ACHN (cell line): ENCODE measurements at regions of chr1 and their contacts with region 1.

Region 1: DNA sequence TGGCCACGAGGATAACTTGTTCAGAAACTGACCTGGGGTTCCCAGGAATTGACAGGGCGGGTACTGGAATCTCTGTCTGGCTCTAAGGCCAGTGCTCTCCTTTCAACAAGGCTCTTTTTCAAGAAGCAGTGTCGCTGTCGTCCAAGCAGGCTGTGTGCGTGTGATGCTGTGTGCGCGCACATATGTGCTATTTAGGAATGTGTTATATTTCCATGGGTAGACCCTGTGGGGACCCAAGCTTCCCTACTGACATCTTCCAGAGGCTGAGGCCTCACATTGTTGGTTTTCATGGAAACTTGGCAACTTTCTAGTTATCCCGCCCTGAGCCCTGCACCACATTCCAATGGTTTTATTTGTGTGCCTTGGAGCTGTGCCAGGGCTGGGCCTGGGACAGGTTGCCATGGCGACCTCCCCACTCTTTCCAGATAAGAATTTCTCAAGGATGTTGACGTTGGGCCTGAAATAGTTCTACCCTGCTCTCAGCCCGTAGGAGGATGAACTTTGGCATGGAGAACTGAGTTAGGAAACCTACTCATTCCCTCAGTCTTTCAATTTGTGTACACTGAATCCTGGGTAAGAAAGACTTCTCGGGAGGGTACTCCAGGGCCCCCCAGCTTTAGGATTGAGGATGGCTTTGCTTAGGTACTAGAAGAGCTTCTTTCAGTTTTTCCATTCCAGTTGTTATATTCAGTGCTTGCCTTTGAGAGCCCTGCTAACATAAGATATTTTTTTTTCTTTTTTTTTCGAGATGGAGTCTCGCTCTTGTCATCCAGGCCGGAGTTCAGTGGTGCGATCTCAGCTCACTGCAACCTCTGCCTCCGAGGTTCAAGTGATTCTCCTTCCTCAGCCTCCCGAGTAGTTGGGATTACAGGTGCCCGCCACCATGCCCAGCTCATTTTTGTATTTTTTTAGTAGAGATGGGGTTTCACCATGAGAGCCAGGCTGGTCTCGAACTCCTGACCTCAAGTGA is 38.8 kb upstream of the SRSF10 start:
- DNase-seq: peak; percentile 97

Region 2: GRCh38 chr1:23959461-23960290 is 59.2 kb before region 1 on chr1 and contains the start of gene PNRC2:
- in situ Hi-C with region 1: loop called (anchors 10 kb)
- DNase-seq: peak; percentile 92